ENCODE measurements at regions of chr2 and their contacts with region 1.

Region 1: DNA sequence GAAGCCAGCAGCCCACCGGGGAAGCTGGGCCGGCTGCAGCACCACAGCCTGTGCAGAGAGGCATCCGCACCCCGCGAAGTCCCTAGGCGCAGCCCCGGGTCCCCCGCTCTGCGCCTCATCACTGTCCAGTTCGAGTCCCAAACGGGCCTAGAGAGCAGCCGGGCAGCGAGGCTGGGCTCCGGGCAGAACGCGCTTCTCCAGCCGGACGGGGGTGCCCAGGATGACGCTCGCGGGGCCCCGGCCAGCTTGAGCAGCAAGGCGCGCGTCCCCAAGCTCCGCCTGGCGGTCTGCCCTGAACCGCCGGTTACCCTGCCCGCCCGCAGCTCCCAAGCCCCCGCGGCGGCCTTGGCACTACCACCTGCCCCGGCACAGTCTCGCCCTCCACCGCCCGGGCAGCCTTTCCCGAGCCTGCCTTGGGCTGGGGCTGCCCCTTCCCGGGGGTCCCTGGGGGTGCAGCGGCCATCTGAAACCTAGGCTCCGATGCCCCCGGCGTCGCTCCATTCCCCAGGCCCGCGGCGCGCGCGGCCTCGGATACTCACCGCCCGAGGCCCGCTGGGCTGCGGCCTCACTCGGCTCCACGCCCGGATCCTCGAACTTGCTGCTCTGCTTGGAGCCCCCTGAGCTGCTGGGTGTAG is 591 bp downstream of the SLC16A14 start:
- DNase-seq: peak; percentile 7 to 51
- ATAC-seq: peak; percentile 72 to 77
- H3K4me3 ChIP-seq: peak overlapping the region; percentile 51
- H3K27ac ChIP-seq: peak overlapping the region; percentile 44 to 70; a peak in 5 of 6 replicates
- H3K4me1 ChIP-seq: no peaks in the 10 kb centered on the region
- CTCF ChIP-seq: no peak; the same call in 2 of the 3 replicates
- EP300 ChIP-seq: no peak
- POLR2A ChIP-seq: no peak
- RAD21 ChIP-seq: no peak

Region 2: DNA sequence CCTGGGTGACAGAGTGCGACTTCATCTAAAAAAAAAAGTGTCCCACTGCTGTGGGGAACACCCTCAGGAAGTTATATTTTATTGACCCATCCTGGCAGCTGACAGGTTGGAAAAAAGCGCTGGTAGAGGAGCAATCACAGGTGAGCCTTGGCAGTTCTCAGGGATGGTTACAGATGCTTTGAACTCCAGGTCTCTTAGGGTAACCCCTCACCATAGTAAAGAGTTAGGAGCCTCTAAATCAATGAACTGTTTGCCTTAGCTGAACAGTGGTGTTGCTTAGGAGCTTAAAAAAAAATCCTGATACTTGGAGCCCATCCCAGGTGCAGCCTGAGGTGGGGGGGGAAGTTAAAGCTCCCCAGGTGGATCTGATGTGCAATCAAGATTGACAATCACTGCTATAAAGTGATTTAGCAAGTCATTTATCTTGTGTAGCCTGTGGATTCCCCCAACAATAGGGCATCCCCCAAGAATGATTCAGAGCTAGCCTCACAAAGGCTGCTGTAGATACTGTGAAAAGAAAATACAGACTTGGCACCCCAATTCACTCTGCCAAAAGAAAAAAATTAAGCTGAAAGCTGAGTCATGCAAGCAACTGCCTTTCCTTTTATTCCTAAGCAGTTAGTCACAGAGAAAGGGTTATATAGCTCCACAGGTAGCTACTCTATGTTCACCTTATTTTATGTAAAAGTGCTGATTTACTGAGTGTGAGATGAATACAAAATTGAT is 14.2 kb before region 1 on chr2:
- CTCF ChIA-PET with region 1: interaction called, 44 read pairs
- POLR2A ChIA-PET with region 1: no interaction called
- DNase-seq: peak in 1 of 2 experiments; percentile 33
- ATAC-seq: peak; percentile 86 to 91
- H3K4me3 ChIP-seq: no peak overlapping the region
- H3K27ac ChIP-seq: peak overlapping the region; percentile 19 to 51; a peak in 2 of 6 replicates
- H3K4me1 ChIP-seq: peaks cover 23% of the 10 kb centered on the region; the same call in 2 of the 3 replicates
- CTCF ChIP-seq: no peak
- EP300 ChIP-seq: no peak
- POLR2A ChIP-seq: no peak
- RAD21 ChIP-seq: no peak

Region 3: DNA sequence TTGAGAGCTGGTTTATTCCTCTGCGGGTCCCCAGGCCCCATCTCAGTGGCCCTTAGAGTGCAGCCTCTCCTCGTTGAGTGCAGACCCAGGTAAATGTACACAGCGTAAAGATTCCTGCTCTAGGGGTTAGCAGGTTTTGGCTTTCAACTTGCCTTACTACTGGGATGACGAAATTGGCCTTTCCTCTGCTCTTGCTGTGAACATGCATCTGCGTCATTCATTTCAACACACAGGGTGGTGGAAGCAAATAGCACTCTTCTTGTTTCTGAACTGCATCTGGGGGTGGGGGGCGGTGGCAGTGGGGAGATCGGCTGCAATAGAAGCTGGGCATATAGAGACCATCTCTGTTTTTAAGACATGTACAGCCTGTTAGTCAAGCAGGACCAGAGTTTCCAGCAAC is 17.1 kb after region 1 on chr2:
- CTCF ChIA-PET with region 1: interaction called, 11 read pairs
- POLR2A ChIA-PET with region 1: no interaction called
- DNase-seq: no peak
- ATAC-seq: no peak
- H3K4me3 ChIP-seq: no peak overlapping the region
- H3K27ac ChIP-seq: no peak overlapping the region
- H3K4me1 ChIP-seq: no peaks in the 10 kb centered on the region
- CTCF ChIP-seq: no peak
- EP300 ChIP-seq: no peak
- POLR2A ChIP-seq: no peak
- RAD21 ChIP-seq: no peak

Region 4: GRCh38 chr2:230160112-230160660 is 92.1 kb after region 1 on chr2:
- CTCF ChIA-PET with region 1: interaction called, 54 read pairs
- POLR2A ChIA-PET with region 1: no interaction called
- DNase-seq: peak; percentile 47 to 48
- ATAC-seq: peak; percentile 48 to 88; a peak in 4 of 6 replicates
- H3K4me3 ChIP-seq: no peak overlapping the region
- H3K27ac ChIP-seq: no peak overlapping the region
- H3K4me1 ChIP-seq: no peaks in the 10 kb centered on the region
- CTCF ChIP-seq: peak; percentile 75
- EP300 ChIP-seq: no peak
- POLR2A ChIP-seq: no peak
- RAD21 ChIP-seq: peak; percentile 65 to 71

Region 5: DNA sequence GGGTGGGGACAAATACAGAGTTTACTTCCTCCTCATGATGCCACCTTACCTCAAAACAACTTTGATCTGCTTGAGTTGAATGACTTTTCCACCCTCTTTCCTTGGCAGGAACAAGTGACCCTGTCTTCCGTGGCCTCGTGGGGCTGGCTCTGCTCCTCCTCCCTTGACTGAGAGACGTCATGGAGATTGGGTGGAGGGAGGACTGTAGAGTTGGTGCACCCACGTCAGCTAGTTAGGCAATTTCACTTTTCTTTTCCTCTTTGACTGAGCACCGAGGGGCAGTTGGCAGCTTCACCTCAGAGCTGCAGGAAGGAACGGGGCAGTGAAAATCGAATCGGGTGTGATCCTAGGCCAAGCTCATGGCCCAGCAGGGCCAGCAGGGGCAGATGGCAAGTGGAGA is 157.4 kb after region 1 on chr2 and contains the start of gene SP140:
- CTCF ChIA-PET with region 1: no interaction called
- POLR2A ChIA-PET with region 1: no interaction called
- DNase-seq: no peak
- ATAC-seq: no peak
- H3K4me3 ChIP-seq: no peak within 1 kb of the TSS
- H3K27ac ChIP-seq: no peak within 1 kb of the TSS
- H3K4me1 ChIP-seq: peaks cover 2% of the 10 kb centered on the region; the same call in 2 of the 3 replicates
- CTCF ChIP-seq: no peak
- EP300 ChIP-seq: no peak
- POLR2A ChIP-seq: no peak
- RAD21 ChIP-seq: no peak
- polyA plus RNA-seq, gene SP140: 0.10 TPM in 1 of 2 replicates, not detected in the other

Region 6: GRCh38 chr2:230614913-230615332 is 546.8 kb after region 1 on chr2:
- CTCF ChIA-PET with region 1: interaction called, 15 read pairs
- POLR2A ChIA-PET with region 1: interaction called, 3 read pairs
- DNase-seq: no peak
- ATAC-seq: no peak
- H3K4me3 ChIP-seq: no peak overlapping the region
- H3K27ac ChIP-seq: peak overlapping the region; percentile 37 to 75; a peak in 4 of 6 replicates
- H3K4me1 ChIP-seq: peaks cover 26% of the 10 kb centered on the region
- CTCF ChIP-seq: no peak
- EP300 ChIP-seq: no peak
- POLR2A ChIP-seq: no peak
- RAD21 ChIP-seq: no peak

Measured in A549 (cell line).